Left cardiac atrium (tissue), 4 donors: ENCODE measurements at regions of chr11 and their contacts with region 1.

Region 1: GRCh38 chr11:44538375-44539054 is 26.9 kb upstream of the CD82 start:
- DNase-seq: peak; percentile 74
- ATAC-seq: peak; percentile 95 to 96

Region 2: DNA sequence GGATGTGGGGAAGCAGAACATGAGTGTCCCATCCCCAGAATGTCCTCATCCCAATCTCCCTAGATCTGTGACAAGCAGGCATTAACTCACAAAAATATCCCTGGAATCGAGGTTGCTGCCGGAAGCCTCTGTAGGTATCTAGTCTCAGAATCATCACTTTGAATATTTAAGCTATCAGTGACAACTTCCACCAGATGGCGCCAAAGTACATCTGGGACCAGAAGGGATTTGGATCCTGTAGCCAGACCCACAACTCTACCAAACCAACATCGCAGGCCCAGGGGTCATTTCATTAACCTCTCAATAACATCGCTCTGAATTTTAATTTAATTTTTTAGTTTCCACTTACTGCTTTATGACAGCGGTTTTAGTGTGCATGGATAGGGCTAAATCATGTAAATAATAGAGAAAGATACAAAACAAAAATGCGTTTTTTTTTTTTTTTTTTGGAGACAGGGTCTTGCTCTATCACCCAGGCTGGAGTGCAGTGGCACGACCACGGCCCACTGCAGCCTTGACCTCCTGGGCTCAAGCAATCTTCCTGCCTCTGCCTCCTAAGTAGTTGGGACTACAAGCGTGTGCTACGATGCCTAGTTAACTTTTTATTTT is 444.2 kb before region 1 on chr11:
- intact Hi-C with region 1: loop called in 1 of 2 experiments (anchors 5 kb)
- DNase-seq: peak; percentile 83
- ATAC-seq: peak; percentile 51 to 62

Region 3: GRCh38 chr11:44110231-44110679 is 428.3 kb before region 1 on chr11:
- intact Hi-C with region 1: loop called in 1 of 2 experiments (anchors 10 kb)
- DNase-seq: peak; percentile 56
- ATAC-seq: peak; percentile 77 to 86

Region 4: DNA sequence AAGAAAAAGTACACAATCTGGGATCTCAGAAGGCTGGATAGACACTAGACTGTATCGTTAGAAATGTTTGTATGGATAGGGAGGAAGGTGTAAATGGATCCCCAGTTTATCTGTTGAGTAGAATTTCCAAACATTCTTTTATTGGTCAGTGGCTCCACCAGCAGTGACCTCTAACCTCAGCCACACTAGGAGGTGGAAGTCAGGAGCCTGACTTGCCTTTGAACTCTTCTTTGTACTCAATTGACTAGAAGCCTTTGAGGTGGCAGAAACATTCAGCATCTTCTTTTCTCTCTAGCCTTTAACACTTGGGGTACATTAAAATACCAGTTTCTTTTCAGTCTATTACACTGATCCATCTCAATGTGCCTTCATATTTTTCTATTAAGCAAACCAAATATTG is 403.9 kb before region 1 on chr11:
- intact Hi-C with region 1: loop called in 1 of 2 experiments (anchors 2 kb)
- DNase-seq: no peak
- ATAC-seq: no peak

Region 5: GRCh38 chr11:44286268-44286880 is 252.1 kb before region 1 on chr11:
- intact Hi-C with region 1: loop called (anchors 1 to 2 kb)
- DNase-seq: peak; percentile 55
- ATAC-seq: peak; percentile 57 to 72

Region 6: GRCh38 chr11:44351006-44351660 is 187.4 kb before region 1 on chr11:
- intact Hi-C with region 1: no loop called
- DNase-seq: no peak
- ATAC-seq: no peak